Ascending aorta (tissue), 2 donors: ENCODE measurements at regions of chr13 and their contacts with region 1.

Region 1: DNA sequence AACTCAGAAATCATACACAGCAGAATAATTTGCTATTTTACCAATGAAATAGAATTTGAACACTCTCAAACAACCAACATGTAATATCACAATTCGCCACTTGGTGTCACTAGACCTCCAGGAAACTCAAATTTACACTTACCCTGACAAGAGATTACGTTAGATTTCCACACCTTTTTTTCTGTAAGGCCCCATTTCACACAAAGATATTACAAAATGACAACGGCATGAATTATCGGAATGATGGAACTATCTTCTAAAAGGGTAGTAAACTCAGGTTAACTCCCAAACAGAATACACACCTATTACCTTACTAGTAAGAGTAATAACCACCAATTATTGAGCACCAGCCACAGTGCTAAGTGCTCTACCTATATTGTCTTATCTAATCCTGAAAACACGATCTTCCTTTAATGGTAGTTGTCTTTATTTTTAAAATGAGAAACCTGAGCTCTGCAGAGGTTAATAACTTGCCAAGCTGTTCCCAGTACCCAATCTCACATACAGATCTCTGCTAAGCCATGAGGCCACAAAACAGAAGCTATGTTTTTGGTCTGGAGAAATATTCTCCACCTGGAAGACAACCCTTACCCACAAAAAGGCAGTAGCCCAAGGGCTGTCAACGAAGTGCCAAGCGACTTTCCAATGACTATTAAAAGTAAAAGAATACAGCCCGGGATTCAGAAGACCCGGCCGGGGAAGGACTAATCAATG is 152.4 kb downstream of the DCLK1 start:
- DNase-seq: no peak
- H3K4me3 ChIP-seq: no peak overlapping the region
- H3K27ac ChIP-seq: peak overlapping the region; percentile 69 to 71
- H3K4me1 ChIP-seq: peaks cover 0 to 7% of the 10 kb centered on the region in 2 donors
- H3K27me3 ChIP-seq: no peaks in the 10 kb centered on the region
- CTCF ChIP-seq: peak; percentile 46 to 75 (median 73)

Region 2: GRCh38 chr13:35947315-35947714 is 31.4 kb before region 1 on chr13:
- intact Hi-C with region 1: no loop called
- DNase-seq: no peak
- H3K4me3 ChIP-seq: no peak overlapping the region
- H3K27ac ChIP-seq: no peak overlapping the region
- H3K4me1 ChIP-seq: no peaks in the 10 kb centered on the region
- H3K27me3 ChIP-seq: no peaks in the 10 kb centered on the region
- CTCF ChIP-seq: no peak

Region 3: DNA sequence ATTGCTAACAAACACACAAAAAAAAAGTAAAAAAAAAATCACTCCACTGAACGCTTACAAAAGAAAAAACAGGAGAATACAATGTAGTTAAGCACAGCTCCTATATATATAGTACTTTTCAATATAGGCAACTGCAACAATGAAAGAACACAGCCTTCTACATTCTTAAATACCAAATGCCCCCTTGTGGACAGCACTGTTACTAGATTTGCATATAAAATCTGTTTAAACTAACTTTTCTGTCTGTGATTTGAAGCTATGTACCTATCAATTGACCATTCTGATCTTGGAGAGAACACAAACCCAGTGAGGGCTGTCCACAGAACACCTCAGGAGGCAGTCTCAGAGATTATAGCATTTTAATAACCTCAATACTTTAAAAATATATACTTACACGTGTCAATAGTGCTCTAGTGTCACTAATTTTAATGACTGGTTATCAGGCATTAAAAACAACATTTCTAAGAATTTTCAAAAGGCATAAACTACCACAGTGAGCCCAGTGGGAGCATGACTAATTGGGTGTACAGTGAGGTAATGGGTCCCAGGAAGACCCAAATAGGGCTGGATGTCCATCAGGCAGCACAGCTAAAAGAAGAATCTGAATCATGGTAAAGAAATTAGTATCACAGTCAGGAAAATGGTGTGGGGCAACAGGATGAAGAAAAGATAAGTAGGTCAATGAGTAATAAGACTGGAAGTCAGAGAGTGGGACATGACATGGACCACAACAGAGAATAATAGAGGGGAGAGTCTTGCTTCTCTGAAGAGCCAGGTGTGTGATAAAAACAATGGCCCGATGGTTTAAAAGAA is 296.6 kb after region 1 on chr13:
- intact Hi-C with region 1: loop called (anchors 1 kb)
- DNase-seq: no peak
- H3K4me3 ChIP-seq: no peak overlapping the region
- H3K27ac ChIP-seq: no peak overlapping the region
- H3K4me1 ChIP-seq: no peaks in the 10 kb centered on the region
- H3K27me3 ChIP-seq: no peaks in the 10 kb centered on the region
- CTCF ChIP-seq: peak; percentile 13 to 66 (median 46)